ENCODE measurements at regions of chr6 and their contacts with region 1.

Region 1: GRCh38 chr6:56510984-56511531 is 131.6 kb downstream of the DST start:
- DNase-seq: peak; percentile 34
- ATAC-seq: no peak
- H3K4me3 ChIP-seq: no peak overlapping the region
- H3K27ac ChIP-seq: no peak overlapping the region
- H3K4me1 ChIP-seq: peaks cover 16% of the 10 kb centered on the region
- H3K27me3 ChIP-seq: no peaks in the 10 kb centered on the region
- CTCF ChIP-seq: no peak
- POLR2A ChIP-seq: no peak
- RAD21 ChIP-seq: no peak

Region 2: GRCh38 chr6:55536391-55536956 is 974.6 kb before region 1 on chr6:
- CTCF ChIA-PET with region 1: no interaction called
- POLR2A ChIA-PET with region 1: no interaction called
- dilution Hi-C with region 1: no loop called
- in situ Hi-C with region 1: no loop called
- intact Hi-C with region 1: no loop called
- DNase-seq: no peak
- ATAC-seq: no peak
- H3K4me3 ChIP-seq: no peak overlapping the region
- H3K27ac ChIP-seq: no peak overlapping the region
- H3K4me1 ChIP-seq: no peaks in the 10 kb centered on the region
- H3K27me3 ChIP-seq: no peaks in the 10 kb centered on the region
- CTCF ChIP-seq: no peak
- POLR2A ChIP-seq: no peak
- RAD21 ChIP-seq: no peak

Region 3: DNA sequence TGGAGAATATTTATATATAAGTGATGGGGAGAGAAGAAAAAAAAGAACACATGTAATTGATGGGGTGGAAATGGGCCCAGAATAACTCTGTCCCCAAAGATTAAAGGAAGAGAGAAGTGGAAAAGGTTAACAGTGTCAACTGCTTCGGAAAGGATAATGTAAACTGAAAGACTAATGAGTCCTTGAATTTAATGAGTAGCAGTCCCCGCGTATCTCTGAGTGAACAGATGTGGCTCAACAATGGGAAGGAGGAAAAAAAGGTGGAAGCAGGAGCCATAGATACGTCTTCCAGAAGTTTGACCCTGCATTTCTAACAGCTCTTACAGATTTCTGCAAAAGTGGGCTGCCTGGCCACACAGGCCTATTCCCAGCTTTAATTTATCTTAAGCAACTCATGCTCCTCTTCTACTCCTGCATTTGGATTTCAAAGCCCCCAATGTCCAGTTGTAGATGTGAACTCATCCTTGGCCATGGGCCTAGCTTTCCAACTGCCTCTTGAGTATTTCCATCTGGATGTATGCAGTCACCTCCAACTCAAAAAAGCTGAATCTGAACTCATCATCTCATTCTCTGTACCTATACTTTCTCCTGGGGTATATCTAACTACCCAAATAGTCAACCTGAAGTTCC is 70.4 kb after region 1 on chr6:
- CTCF ChIA-PET with region 1: no interaction called
- POLR2A ChIA-PET with region 1: interaction called, 20 read pairs
- dilution Hi-C with region 1: no loop called
- in situ Hi-C with region 1: no loop called
- intact Hi-C with region 1: no loop called
- DNase-seq: peak; percentile 50
- ATAC-seq: peak; percentile 25
- H3K4me3 ChIP-seq: no peak overlapping the region
- H3K27ac ChIP-seq: 0 out of 2 replicates have a peak overlapping the region, but pooled peaks have one; percentile 7
- H3K4me1 ChIP-seq: peaks cover 8% of the 10 kb centered on the region; the same call in 1 of the 2 replicates
- H3K27me3 ChIP-seq: no peaks in the 10 kb centered on the region
- CTCF ChIP-seq: no peak
- POLR2A ChIP-seq: no peak
- RAD21 ChIP-seq: no peak

Region 4: DNA sequence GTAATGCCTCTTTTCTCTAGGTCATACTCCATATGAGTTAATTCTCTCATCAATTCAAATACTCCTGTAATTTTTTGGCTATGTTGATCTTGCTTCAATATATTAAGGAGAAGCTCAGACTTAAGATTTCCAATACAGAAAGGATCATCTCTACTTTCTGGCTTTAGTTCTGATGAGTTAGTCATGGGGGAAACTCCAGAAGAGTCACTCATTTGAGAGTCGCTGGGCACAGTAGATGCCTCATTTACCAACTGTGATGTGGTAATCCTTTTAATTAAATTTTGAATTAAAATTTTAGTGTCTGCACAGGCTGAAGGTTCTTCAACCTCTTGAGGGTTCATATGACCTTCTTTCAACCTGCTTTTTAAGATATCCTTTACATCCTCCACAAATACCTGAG is 93.1 kb after region 1 on chr6:
- CTCF ChIA-PET with region 1: no interaction called
- POLR2A ChIA-PET with region 1: no interaction called
- dilution Hi-C with region 1: no loop called
- in situ Hi-C with region 1: no loop called
- intact Hi-C with region 1: no loop called
- DNase-seq: peak; percentile 22
- ATAC-seq: no peak
- H3K4me3 ChIP-seq: no peak overlapping the region
- H3K27ac ChIP-seq: no peak overlapping the region
- H3K4me1 ChIP-seq: no peaks in the 10 kb centered on the region
- H3K27me3 ChIP-seq: no peaks in the 10 kb centered on the region
- CTCF ChIP-seq: no peak
- POLR2A ChIP-seq: no peak
- RAD21 ChIP-seq: no peak